CD8-positive, alpha-beta T cell (primary cell): ENCODE measurements at regions of chr10 and their contacts with region 1.

Region 1: DNA sequence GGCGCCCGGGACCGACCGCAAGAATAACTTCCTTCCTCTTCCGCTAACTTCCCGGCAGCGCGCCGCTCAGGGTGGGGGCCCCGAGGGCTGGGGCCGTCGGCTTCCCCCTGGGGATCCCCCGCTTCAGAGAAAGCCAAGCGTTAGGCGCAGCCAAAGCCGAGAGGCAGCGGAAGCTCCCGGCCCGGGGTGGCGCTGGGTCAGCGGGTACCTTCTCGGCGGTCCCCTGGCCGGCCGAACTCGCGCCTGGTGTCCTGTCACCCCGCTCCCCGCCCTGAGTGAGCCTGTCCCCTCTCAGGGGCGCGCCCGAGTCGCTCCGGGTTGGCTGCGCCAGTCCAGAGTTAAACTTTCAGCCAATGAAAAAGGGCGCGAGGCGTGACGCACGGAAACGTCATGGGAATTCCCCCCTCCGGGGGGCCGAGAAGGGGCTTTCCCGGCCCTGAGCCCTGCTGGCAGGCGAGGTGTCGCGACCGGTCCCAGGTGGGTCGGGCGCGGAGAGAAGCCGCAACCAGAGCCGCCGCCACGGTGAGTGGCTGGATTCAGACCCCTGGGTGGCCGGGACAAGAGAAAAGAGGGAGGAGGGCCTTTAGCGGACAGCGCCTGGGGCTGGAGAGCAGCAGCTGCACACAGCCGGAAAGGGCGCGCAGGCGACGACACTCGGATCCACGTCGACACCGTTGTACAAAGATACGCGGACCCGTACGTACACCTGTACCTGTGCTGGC is 1.3 kb upstream of the NFKB2 start:
- DNase-seq: peak; percentile 95 to 99 (median 98)
- ATAC-seq: peak; percentile 74
- H3K4me3 ChIP-seq: peak overlapping the region; percentile 89 to 95
- H3K4me3 Mint-ChIP-seq: peak overlapping the region; percentile 90
- H3K27ac ChIP-seq: peak overlapping the region; percentile 99 to 100
- H3K27ac Mint-ChIP-seq: peak overlapping the region; percentile 98
- H3K4me1 ChIP-seq: peaks cover 24% of the 10 kb centered on the region
- H3K4me1 Mint-ChIP-seq: peaks cover 37% of the 10 kb centered on the region
- H3K27me3 ChIP-seq: no peaks in the 10 kb centered on the region
- H3K27me3 Mint-ChIP-seq: no peaks in the 10 kb centered on the region
- CTCF ChIP-seq: no peak

Region 2: DNA sequence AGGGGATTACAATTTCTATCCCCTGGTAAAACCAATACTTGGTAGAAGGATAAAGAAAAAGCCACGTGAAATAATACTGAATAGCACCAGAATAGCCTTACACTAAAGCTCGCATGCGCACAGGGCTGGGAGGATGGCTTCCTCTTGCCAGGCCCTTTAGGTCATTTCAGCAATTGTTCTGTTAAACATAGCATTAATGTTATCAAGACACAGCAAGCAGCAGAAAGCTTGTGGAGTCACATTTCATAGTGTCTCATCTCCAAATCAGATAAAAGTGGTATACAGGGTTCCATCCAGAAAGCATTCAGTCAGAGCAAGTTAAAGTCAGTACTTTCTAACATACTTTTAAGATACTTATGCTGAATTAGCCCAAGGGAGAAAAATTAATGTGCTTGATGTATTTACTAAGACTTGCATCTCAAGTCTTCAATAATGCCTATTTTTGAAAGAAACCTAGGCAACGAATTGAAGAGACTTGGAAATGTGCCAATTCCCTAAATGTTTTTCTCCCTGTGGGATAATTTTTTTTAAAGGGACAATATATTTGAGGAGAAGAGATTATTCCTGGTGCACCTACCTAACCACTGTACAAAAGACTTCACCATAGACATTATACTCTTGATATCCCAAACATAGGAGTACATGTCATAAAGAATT is 596.7 kb before region 1 on chr10:
- CTCF ChIA-PET with region 1: no interaction called
- POLR2A ChIA-PET with region 1: no interaction called
- intact Hi-C with region 1: no loop called
- DNase-seq: no peak
- ATAC-seq: no peak
- H3K4me3 ChIP-seq: no peak overlapping the region
- H3K4me3 Mint-ChIP-seq: no peak overlapping the region
- H3K27ac ChIP-seq: no peak overlapping the region
- H3K27ac Mint-ChIP-seq: peak overlapping the region; percentile 11
- H3K4me1 ChIP-seq: no peaks in the 10 kb centered on the region
- H3K4me1 Mint-ChIP-seq: peaks cover 38% of the 10 kb centered on the region
- H3K27me3 ChIP-seq: no peaks in the 10 kb centered on the region
- H3K27me3 Mint-ChIP-seq: no peaks in the 10 kb centered on the region
- CTCF ChIP-seq: no peak

Region 3: GRCh38 chr10:102120142-102120990 is 273.9 kb before region 1 on chr10 and contains the start of gene LDB1:
- CTCF ChIA-PET with region 1: no interaction called
- POLR2A ChIA-PET with region 1: no interaction called
- intact Hi-C with region 1: loop called in 1 of 2 experiments (anchors 1 kb)
- DNase-seq: peak; percentile 40 to 91 (median 70)
- ATAC-seq: peak; percentile 45
- H3K4me3 ChIP-seq: peak within 1 kb of the TSS; percentile 84 to 94
- H3K4me3 Mint-ChIP-seq: peak within 1 kb of the TSS; percentile 90
- H3K27ac ChIP-seq: peak within 1 kb of the TSS; percentile 97 to 98
- H3K27ac Mint-ChIP-seq: peak within 1 kb of the TSS; percentile 98
- H3K4me1 ChIP-seq: peaks cover 51% of the 10 kb centered on the region
- H3K4me1 Mint-ChIP-seq: peaks cover 55% of the 10 kb centered on the region
- H3K27me3 ChIP-seq: no peaks in the 10 kb centered on the region
- H3K27me3 Mint-ChIP-seq: no peaks in the 10 kb centered on the region
- CTCF ChIP-seq: no peak
- total RNA-seq, gene LDB1: 113 to 124 TPM

Region 4: GRCh38 chr10:102384053-102384452 is 10.2 kb before region 1 on chr10:
- CTCF ChIA-PET with region 1: interaction called, 20 read pairs
- POLR2A ChIA-PET with region 1: interaction called, 5 read pairs
- intact Hi-C with region 1: no loop called
- DNase-seq: peak in 4 of 9 experiments; percentile 26 to 52 (median 38)
- ATAC-seq: peak; percentile 42
- H3K4me3 ChIP-seq: no peak overlapping the region
- H3K4me3 Mint-ChIP-seq: no peak overlapping the region
- H3K27ac ChIP-seq: no peak overlapping the region
- H3K27ac Mint-ChIP-seq: no peak overlapping the region
- H3K4me1 ChIP-seq: no peaks in the 10 kb centered on the region
- H3K4me1 Mint-ChIP-seq: no peaks in the 10 kb centered on the region
- H3K27me3 ChIP-seq: no peaks in the 10 kb centered on the region
- H3K27me3 Mint-ChIP-seq: no peaks in the 10 kb centered on the region
- CTCF ChIP-seq: no peak

Region 5: GRCh38 chr10:102432162-102432950 is 38.1 kb after region 1 on chr10 and contains the start of gene CUEDC2:
- CTCF ChIA-PET with region 1: interaction called, 11 read pairs
- POLR2A ChIA-PET with region 1: interaction called, 5 read pairs
- intact Hi-C with region 1: loop called (anchors 1 kb)
- DNase-seq: peak; percentile 88 to 98 (median 93)
- ATAC-seq: peak; percentile 93
- H3K4me3 ChIP-seq: peak within 1 kb of the TSS; percentile 76 to 96
- H3K4me3 Mint-ChIP-seq: peak within 1 kb of the TSS; percentile 95
- H3K27ac ChIP-seq: peak within 1 kb of the TSS; percentile 62 to 67
- H3K27ac Mint-ChIP-seq: peak within 1 kb of the TSS; percentile 89
- H3K4me1 ChIP-seq: peaks cover 48% of the 10 kb centered on the region
- H3K4me1 Mint-ChIP-seq: peaks cover 49% of the 10 kb centered on the region
- H3K27me3 ChIP-seq: no peaks in the 10 kb centered on the region
- H3K27me3 Mint-ChIP-seq: no peaks in the 10 kb centered on the region
- CTCF ChIP-seq: no peak
- total RNA-seq, gene CUEDC2: 24.2 to 27.0 TPM

Region 6: GRCh38 chr10:102461187-102462054 is 67.2 kb after region 1 on chr10:
- CTCF ChIA-PET with region 1: interaction called, 10 read pairs
- POLR2A ChIA-PET with region 1: interaction called, 6 read pairs
- intact Hi-C with region 1: loop called (anchors 1 to 5 kb)
- DNase-seq: peak; percentile 85 to 96 (median 93)
- ATAC-seq: peak; percentile 99
- H3K4me3 ChIP-seq: peak overlapping the region; percentile 67 to 76
- H3K4me3 Mint-ChIP-seq: peak overlapping the region; percentile 89
- H3K27ac ChIP-seq: peak overlapping the region in 1 of 2 experiments; percentile 59
- H3K27ac Mint-ChIP-seq: peak overlapping the region; percentile 79
- H3K4me1 ChIP-seq: peaks cover 20% of the 10 kb centered on the region
- H3K4me1 Mint-ChIP-seq: peaks cover 35% of the 10 kb centered on the region
- H3K27me3 ChIP-seq: no peaks in the 10 kb centered on the region
- H3K27me3 Mint-ChIP-seq: no peaks in the 10 kb centered on the region
- CTCF ChIP-seq: no peak

Region 7: GRCh38 chr10:102583435-102584417 is 189.5 kb after region 1 on chr10:
- CTCF ChIA-PET with region 1: interaction called, 16 read pairs
- POLR2A ChIA-PET with region 1: interaction called, 4 read pairs
- intact Hi-C with region 1: loop called (anchors 1 to 2 kb)
- DNase-seq: peak; percentile 67 to 87 (median 82)
- ATAC-seq: peak; percentile 98
- H3K4me3 ChIP-seq: no peak overlapping the region
- H3K4me3 Mint-ChIP-seq: no peak overlapping the region
- H3K27ac ChIP-seq: no peak overlapping the region
- H3K27ac Mint-ChIP-seq: no peak overlapping the region
- H3K4me1 ChIP-seq: no peaks in the 10 kb centered on the region
- H3K4me1 Mint-ChIP-seq: peaks cover 4% of the 10 kb centered on the region
- H3K27me3 ChIP-seq: no peaks in the 10 kb centered on the region
- H3K27me3 Mint-ChIP-seq: no peaks in the 10 kb centered on the region
- CTCF ChIP-seq: peak; percentile 78